Colonic mucosa (tissue), 4 donors: ENCODE measurements at regions of chr6 and their contacts with region 1.

Region 1: DNA sequence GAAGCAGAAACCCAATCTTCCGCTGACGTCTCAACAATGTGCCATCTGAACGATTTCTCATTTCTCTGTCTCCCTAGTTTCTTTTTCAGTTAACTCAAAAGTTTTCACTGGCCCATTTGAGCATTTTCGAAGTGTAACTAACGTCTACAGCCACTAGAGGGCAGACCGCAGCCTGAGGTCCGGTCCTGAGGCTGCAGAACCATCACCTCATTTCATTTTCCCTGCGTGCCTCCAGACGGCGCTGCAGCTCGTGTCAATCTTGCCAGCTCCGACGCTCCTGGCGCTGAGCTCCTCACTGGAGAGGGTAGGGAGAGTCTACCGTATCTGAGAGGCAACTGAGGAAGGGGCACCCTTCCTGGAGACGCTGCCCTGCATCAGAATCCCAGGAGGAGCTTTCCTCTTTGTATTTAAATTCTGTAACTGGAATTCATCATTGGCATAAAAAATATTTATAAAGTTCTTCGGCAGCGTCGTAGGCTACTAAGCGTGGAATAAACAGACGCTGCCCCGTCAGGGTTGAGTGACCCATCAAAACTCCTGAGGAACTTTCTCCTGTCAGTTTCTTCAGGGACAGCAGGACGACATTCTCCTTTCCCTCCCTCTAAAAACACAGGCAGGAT is 28.5 kb upstream of the DTNBP1 start:
- DNase-seq: peak; percentile 83
- H3K4me3 ChIP-seq: peak overlapping the region; percentile 8
- H3K27ac ChIP-seq: peak overlapping the region; percentile 38
- H3K4me1 ChIP-seq: no peaks in the 10 kb centered on the region
- H3K27me3 ChIP-seq: no peaks in the 10 kb centered on the region
- CTCF ChIP-seq: peak; percentile 96

Region 2: GRCh38 chr6:15132854-15133670 is 558.3 kb before region 1 on chr6:
- intact Hi-C with region 1: no loop called
- DNase-seq: no peak
- H3K4me3 ChIP-seq: no peak overlapping the region
- H3K27ac ChIP-seq: no peak overlapping the region
- H3K4me1 ChIP-seq: no peaks in the 10 kb centered on the region
- H3K27me3 ChIP-seq: no peaks in the 10 kb centered on the region
- CTCF ChIP-seq: no peak

Region 3: DNA sequence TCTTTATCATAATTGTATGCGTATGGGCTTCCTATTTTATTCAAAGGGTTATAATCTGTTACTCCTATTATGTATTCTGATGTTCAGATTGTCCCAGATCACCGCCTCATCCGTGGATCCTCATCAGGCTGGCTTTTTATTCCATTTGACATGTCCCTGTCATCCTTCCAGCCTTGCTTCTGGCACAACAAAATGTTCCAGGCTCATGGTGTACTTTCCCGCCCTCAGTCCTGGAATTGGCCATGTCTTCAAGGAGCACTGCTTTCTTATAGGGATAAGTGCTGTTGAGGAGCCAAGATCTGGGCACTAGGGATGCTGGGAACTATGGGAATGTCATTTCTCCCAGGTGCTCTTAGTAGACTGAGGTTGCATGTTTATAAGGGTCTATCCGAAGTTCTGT is 237.7 kb before region 1 on chr6:
- intact Hi-C with region 1: no loop called
- DNase-seq: no peak
- H3K4me3 ChIP-seq: no peak overlapping the region
- H3K27ac ChIP-seq: no peak overlapping the region
- H3K4me1 ChIP-seq: no peaks in the 10 kb centered on the region
- H3K27me3 ChIP-seq: no peaks in the 10 kb centered on the region
- CTCF ChIP-seq: no peak

Region 4: GRCh38 chr6:15473741-15474161 is 217.6 kb before region 1 on chr6:
- intact Hi-C with region 1: no loop called
- DNase-seq: no peak
- H3K4me3 ChIP-seq: no peak overlapping the region
- H3K27ac ChIP-seq: no peak overlapping the region
- H3K4me1 ChIP-seq: no peaks in the 10 kb centered on the region
- H3K27me3 ChIP-seq: no peaks in the 10 kb centered on the region
- CTCF ChIP-seq: no peak

Region 5: DNA sequence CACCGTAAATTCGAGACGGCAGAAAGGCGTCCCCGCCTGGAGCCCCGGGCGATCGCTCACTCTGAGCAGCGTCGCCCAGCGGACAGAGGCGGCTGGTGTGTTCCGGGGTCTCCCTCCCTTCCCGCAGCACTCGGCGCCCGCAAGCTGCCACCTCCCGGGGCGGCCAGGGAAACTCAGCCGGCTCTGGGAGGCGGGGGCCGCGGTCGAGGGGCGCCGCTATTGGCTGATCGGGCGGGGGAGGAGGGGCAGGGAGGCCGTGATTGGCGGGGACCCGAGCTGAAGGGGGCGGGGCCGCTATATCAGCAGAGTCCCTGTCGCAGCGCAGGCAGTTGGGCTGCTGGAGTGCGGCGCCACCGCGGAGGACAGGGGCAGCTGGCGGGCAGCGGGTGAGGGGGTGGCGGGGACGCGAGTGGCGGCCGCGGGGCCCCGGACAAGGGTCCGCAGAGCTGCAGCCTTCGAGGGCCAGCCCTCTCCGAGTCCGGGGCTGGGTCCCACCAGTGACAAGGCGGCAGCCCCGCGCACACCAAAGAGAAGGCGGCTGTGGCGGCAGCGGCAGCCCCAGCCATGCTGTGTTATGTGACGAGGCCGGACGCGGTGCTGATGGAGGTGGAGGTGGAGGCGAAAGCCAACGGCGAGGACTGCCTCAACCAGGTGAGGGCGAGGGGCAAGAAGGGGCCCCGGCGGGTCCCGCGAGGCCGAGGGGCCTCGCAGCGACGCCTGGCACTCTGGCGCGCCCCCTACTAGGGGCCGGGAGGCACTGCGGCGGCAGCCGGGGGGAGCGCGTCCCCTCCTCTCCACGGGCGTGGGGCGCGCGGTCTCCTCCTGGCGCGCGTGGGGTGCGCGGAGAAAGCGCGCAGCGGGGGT is 437.6 kb after region 1 on chr6 and contains the start of gene MYLIP:
- intact Hi-C with region 1: loop called (anchors 5 kb)
- DNase-seq: peak; percentile 99
- H3K4me3 ChIP-seq: peak within 1 kb of the TSS; percentile 91
- H3K27ac ChIP-seq: peak within 1 kb of the TSS; percentile 92
- H3K4me1 ChIP-seq: no peaks in the 10 kb centered on the region
- H3K27me3 ChIP-seq: no peaks in the 10 kb centered on the region
- CTCF ChIP-seq: peak; percentile 70
- total RNA-seq, gene MYLIP: 23.9 to 32.2 TPM

Region 6: GRCh38 chr6:16183187-16183664 is 491.9 kb after region 1 on chr6:
- intact Hi-C with region 1: loop called (anchors 5 kb)
- DNase-seq: no peak
- H3K4me3 ChIP-seq: no peak overlapping the region
- H3K27ac ChIP-seq: no peak overlapping the region
- H3K4me1 ChIP-seq: no peaks in the 10 kb centered on the region
- H3K27me3 ChIP-seq: no peaks in the 10 kb centered on the region
- CTCF ChIP-seq: peak; percentile 68

Region 7: DNA sequence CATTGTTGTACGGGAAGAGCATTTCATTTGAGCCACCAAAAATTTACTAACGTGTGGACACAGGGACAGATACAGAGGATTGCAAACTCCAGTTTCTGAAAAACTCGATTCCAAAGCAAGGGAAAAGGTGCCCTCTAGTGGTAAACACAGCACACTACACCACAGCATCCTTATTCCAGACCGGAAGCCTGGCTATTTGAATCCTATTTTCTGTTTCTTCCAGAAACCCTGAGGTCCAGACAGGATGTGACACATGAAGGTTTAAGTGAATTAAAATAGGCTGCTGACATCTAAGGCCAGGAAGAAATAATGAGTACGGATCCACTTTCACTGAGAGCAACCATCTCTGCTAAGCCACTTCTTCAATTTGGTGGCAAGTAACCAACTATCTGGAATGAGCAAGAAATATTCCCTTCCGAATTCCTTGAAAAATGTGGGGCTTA is 515.3 kb after region 1 on chr6:
- intact Hi-C with region 1: loop called (anchors 5 kb)
- DNase-seq: peak; percentile 66
- H3K4me3 ChIP-seq: no peak overlapping the region
- H3K27ac ChIP-seq: no peak overlapping the region
- H3K4me1 ChIP-seq: no peaks in the 10 kb centered on the region
- H3K27me3 ChIP-seq: no peaks in the 10 kb centered on the region
- CTCF ChIP-seq: peak; percentile 98